ENCODE measurements at regions of chr15 and their contacts with region 1.

Region 1: DNA sequence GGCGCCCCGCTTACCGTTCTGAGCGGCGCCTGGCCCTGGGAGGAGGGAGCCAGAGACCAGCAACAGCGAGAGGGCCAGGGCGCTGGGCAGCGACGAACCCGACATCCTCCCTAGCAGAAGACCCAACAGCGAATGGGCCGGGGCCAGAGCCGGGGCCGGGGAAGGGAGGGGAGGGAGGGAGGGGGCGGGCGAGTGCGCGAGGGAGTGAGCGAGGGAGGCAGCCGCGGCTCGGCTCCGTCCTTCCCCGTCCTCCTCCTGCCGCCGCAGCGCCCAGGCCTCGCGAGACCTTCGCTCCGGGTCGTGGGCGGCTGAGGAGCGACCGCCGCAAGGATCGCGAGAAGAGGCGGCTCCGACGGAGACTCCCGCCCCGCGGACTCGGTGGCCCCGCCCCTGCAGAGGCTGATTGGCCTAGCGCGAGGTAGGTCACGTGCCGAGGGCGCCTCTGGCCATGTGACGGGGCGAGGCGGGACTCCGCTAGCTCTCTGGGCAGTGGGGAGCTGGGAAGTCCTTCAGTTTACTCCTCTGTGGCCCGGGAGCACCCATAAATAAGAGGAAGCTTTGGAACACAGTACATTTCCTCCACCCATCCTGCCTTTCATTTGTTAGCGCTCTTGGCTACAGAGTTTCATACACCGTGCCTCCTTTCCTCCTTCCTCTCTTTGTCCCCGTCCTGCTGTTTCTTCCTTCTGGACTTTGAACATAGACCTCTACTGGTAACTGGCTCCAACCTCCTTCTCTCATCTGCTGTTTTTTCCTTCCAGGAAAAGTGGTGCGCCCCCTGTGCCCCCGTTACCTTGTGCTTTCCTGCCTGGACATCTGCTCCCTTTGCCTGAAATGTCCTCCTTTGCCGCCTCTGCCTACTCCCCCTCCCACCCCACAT is at the start of gene NPTN:
- DNase-seq: peak; percentile 89
- ATAC-seq: peak; percentile 90
- H3K4me3 ChIP-seq: peak within 1 kb of the TSS; percentile 77 to 88
- H3K27ac ChIP-seq: peak within 1 kb of the TSS; percentile 73
- H3K4me1 ChIP-seq: peaks cover 21 to 43% of the 10 kb centered on the region in 2 experiments
- H3K27me3 ChIP-seq: no peaks in the 10 kb centered on the region
- CTCF ChIP-seq: 0 out of 6 replicates have a peak, but pooled peaks of 1 of the 3 experiments have one; percentile 11
- POLR2A ChIP-seq: peak; percentile 96
- RAD21 ChIP-seq: no peak
- total RNA-seq, gene NPTN: 90.9 TPM

Region 2: DNA sequence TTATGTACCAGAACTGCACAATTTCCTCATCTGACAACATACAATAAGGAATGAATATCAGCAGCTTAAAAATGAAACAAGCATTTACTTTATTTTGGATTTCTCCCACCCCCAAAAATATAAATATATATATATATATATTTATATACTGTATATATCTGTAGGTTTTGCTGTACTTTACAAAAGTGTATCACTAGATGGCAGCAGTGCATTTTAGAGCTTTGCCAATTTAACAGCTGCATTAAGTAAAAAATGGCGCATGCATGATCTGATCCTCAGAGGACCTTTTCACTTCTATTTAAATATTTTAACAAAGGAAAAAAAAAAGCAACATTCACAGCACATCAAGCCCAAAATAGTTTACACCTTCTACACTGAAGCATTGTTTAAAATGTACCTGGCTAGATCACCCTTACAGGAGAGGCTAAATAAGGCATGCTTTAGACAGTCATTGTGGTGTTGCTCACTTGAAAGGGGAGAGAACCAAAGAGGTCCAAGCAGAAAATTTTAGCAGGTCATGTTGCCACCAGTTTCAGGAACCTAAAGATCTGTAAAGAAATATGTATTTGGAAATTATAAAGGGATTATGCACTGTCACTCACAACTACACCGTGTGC is 72.7 kb before region 1 on chr15:
- CTCF ChIA-PET with region 1: interaction called, 33 read pairs
- POLR2A ChIA-PET with region 1: interaction called, 4 read pairs
- RAD21 ChIA-PET with region 1: interaction called, 3 to 4 read pairs
- intact Hi-C with region 1: loop called (anchors 1 kb)
- DNase-seq: peak; percentile 46
- ATAC-seq: peak; percentile 51; the same call in 1 of the 2 replicates
- H3K4me3 ChIP-seq: no peak overlapping the region
- H3K27ac ChIP-seq: no peak overlapping the region
- H3K4me1 ChIP-seq: peaks cover 10 to 13% of the 10 kb centered on the region in 2 experiments
- H3K27me3 ChIP-seq: no peaks in the 10 kb centered on the region
- CTCF ChIP-seq: peak; percentile 36 to 59 (median 43); a peak in 4 of 6 replicates
- POLR2A ChIP-seq: no peak
- RAD21 ChIP-seq: peak; percentile 64

Region 3: GRCh38 chr15:73647259-73648014 is 14.1 kb after region 1 on chr15:
- CTCF ChIA-PET with region 1: interaction called, 17 read pairs
- POLR2A ChIA-PET with region 1: interaction called, 3 read pairs
- RAD21 ChIA-PET with region 1: no interaction called
- intact Hi-C with region 1: no loop called
- DNase-seq: no peak
- ATAC-seq: peak; percentile 40; the same call in 1 of the 2 replicates
- H3K4me3 ChIP-seq: no peak overlapping the region
- H3K27ac ChIP-seq: no peak overlapping the region
- H3K4me1 ChIP-seq: peaks cover 3 to 17% of the 10 kb centered on the region in 2 experiments; a peak in 3 of 4 replicates
- H3K27me3 ChIP-seq: no peaks in the 10 kb centered on the region
- CTCF ChIP-seq: no peak
- POLR2A ChIP-seq: no peak
- RAD21 ChIP-seq: no peak

Region 4: DNA sequence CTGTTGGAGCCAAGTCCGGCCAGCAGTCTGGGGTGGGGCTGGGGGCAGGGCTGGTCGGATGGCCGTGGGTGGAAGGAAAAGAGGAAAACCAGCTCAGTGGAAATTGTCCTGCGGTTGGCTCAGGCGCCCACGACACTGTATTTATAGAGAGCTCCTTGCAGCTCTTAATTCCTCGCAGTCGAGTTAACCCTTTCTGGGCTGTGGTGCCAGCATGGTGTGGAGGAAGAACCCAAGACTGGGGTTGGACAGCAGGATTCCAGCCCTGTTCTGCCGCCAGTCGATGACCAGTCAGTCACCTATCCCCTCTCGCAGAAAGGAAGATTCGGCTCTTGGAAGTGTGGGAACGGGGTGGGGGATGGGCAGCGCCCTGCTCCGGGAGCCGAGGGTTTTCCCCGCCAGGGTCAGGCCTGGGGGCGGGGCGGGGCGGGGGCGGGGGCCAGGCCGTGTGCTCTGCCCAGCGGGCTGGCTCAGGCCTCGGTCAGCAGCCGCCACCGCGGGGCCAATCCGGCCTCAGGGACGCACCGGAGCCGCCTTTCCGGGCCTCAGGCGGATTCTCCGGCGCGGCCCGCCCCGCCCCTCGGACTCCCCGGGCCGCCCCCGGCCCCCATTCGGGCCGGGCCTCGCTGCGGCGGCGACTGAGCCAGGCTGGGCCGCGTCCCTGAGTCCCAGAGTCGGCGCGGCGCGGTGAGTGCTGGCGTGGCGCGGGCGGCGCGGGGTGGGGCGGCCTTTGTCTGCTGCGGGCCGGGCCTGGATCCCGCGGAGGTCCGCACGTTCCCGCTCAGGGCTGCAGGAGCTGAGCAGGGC is 50.6 kb after region 1 on chr15 and contains the start of gene CD276:
- CTCF ChIA-PET with region 1: interaction called, 16 read pairs
- POLR2A ChIA-PET with region 1: interaction called, 3 read pairs
- RAD21 ChIA-PET with region 1: interaction called in 1 of 2 experiments, 3 read pairs
- intact Hi-C with region 1: loop called (anchors 1 kb)
- DNase-seq: peak; percentile 45
- ATAC-seq: peak; percentile 85
- H3K4me3 ChIP-seq: peak within 1 kb of the TSS; percentile 84 to 87
- H3K27ac ChIP-seq: peak within 1 kb of the TSS; percentile 80
- H3K4me1 ChIP-seq: peaks cover 21 to 56% of the 10 kb centered on the region in 2 experiments
- H3K27me3 ChIP-seq: no peaks in the 10 kb centered on the region
- CTCF ChIP-seq: peak in 1 of 3 experiments; percentile 46; a peak in 2 of 6 replicates
- POLR2A ChIP-seq: no peak
- RAD21 ChIP-seq: peak; percentile 46; the same call in 1 of the 2 replicates
- total RNA-seq, gene CD276: 75.4 TPM

Region 5: GRCh38 chr15:73704869-73705645 is 71.7 kb after region 1 on chr15:
- CTCF ChIA-PET with region 1: interaction called, 64 read pairs
- POLR2A ChIA-PET with region 1: no interaction called
- RAD21 ChIA-PET with region 1: interaction called, 4 to 7 read pairs
- intact Hi-C with region 1: loop called (anchors 1 kb)
- DNase-seq: no peak
- ATAC-seq: peak; percentile 87
- H3K4me3 ChIP-seq: no peak overlapping the region
- H3K27ac ChIP-seq: no peak overlapping the region
- H3K4me1 ChIP-seq: peaks cover 0 to 2% of the 10 kb centered on the region in 2 experiments; a peak in 1 of 4 replicates
- H3K27me3 ChIP-seq: no peaks in the 10 kb centered on the region
- CTCF ChIP-seq: peak; percentile 78 to 92 (median 90)
- POLR2A ChIP-seq: no peak
- RAD21 ChIP-seq: peak; percentile 74